HCT116 (cell line): ENCODE measurements at regions of chr5 and their contacts with region 1.

Region 1: DNA sequence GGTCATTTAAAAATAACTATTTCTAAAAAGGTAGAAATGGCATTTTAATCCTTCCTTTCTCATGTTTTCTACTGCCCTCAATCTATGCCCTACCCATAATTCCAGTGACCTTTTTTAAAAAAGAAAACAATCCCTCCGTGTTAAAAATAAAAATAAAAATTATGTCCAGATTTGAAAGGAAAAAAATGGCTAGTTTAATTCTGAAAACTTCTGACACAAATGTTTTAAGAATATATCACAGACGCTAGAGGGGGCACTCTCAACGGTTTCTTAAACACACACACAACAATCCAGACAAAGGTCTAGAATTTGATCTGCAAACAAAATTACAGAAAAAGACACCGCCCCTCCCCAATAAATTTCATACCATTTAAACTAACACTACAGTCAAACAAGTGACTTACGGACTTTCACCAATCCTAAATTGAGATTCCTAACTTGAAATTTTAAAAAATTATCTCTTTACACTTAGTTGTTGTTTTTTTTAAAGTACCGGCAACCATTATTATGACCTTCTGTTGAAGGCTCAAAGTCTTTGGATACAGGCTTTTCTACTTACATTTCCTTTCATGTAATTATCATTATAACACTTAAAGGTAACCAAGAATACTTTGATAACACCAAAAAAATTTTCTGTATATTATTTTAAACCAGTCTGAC is 38.2 kb downstream of the CLINT1 start:
- DNase-seq: peak; percentile 26
- ATAC-seq: 0 out of 2 replicates have a peak, but pooled peaks have one; percentile 44
- H3K4me3 ChIP-seq: no peak overlapping the region
- H3K27ac ChIP-seq: no peak overlapping the region
- H3K4me1 ChIP-seq: peaks cover 2 to 4% of the 10 kb centered on the region in 2 experiments; a peak in 1 of 4 replicates
- H3K27me3 ChIP-seq: no peaks in the 10 kb centered on the region
- CTCF ChIP-seq: peak; percentile 43 to 64 (median 48); a peak in 5 of 6 replicates
- POLR2A ChIP-seq: no peak
- RAD21 ChIP-seq: peak; percentile 45

Region 2: GRCh38 chr5:157917899-157918809 is 97.4 kb after region 1 on chr5:
- CTCF ChIA-PET with region 1: interaction called, 4 read pairs
- POLR2A ChIA-PET with region 1: no interaction called
- RAD21 ChIA-PET with region 1: no interaction called
- intact Hi-C with region 1: loop called (anchors 2 kb)
- DNase-seq: peak; percentile 66
- ATAC-seq: peak; percentile 100
- H3K4me3 ChIP-seq: no peak overlapping the region
- H3K27ac ChIP-seq: no peak overlapping the region
- H3K4me1 ChIP-seq: 0 out of 4 replicates have a peak, but pooled peaks cover 0 to 3% of the 10 kb centered on the region in 2 experiments
- H3K27me3 ChIP-seq: no peaks in the 10 kb centered on the region
- CTCF ChIP-seq: peak; percentile 70 to 81 (median 73)
- POLR2A ChIP-seq: no peak
- RAD21 ChIP-seq: peak; percentile 71

Region 3: GRCh38 chr5:157948738-157949410 is 128.2 kb after region 1 on chr5:
- CTCF ChIA-PET with region 1: interaction called, 15 read pairs
- POLR2A ChIA-PET with region 1: no interaction called
- RAD21 ChIA-PET with region 1: no interaction called
- intact Hi-C with region 1: loop called (anchors 5 kb)
- DNase-seq: peak; percentile 83
- ATAC-seq: peak; percentile 100
- H3K4me3 ChIP-seq: peak overlapping the region in 1 of 2 experiments; percentile 27; a peak in 1 of 4 replicates
- H3K27ac ChIP-seq: no peak overlapping the region
- H3K4me1 ChIP-seq: peaks cover 0 to 9% of the 10 kb centered on the region in 2 experiments; a peak in 1 of 4 replicates
- H3K27me3 ChIP-seq: no peaks in the 10 kb centered on the region
- CTCF ChIP-seq: peak; percentile 81 to 88 (median 88)
- POLR2A ChIP-seq: no peak
- RAD21 ChIP-seq: peak; percentile 67

Region 4: GRCh38 chr5:157994906-157995519 is 174.3 kb after region 1 on chr5:
- CTCF ChIA-PET with region 1: interaction called, 17 read pairs
- POLR2A ChIA-PET with region 1: no interaction called
- RAD21 ChIA-PET with region 1: no interaction called
- intact Hi-C with region 1: loop called (anchors 1 kb)
- DNase-seq: peak; percentile 46
- ATAC-seq: peak; percentile 99
- H3K4me3 ChIP-seq: no peak overlapping the region
- H3K27ac ChIP-seq: no peak overlapping the region
- H3K4me1 ChIP-seq: no peaks in the 10 kb centered on the region
- H3K27me3 ChIP-seq: no peaks in the 10 kb centered on the region
- CTCF ChIP-seq: peak; percentile 70 to 88 (median 73); a peak in 5 of 6 replicates
- POLR2A ChIP-seq: no peak
- RAD21 ChIP-seq: peak; percentile 79

Region 5: DNA sequence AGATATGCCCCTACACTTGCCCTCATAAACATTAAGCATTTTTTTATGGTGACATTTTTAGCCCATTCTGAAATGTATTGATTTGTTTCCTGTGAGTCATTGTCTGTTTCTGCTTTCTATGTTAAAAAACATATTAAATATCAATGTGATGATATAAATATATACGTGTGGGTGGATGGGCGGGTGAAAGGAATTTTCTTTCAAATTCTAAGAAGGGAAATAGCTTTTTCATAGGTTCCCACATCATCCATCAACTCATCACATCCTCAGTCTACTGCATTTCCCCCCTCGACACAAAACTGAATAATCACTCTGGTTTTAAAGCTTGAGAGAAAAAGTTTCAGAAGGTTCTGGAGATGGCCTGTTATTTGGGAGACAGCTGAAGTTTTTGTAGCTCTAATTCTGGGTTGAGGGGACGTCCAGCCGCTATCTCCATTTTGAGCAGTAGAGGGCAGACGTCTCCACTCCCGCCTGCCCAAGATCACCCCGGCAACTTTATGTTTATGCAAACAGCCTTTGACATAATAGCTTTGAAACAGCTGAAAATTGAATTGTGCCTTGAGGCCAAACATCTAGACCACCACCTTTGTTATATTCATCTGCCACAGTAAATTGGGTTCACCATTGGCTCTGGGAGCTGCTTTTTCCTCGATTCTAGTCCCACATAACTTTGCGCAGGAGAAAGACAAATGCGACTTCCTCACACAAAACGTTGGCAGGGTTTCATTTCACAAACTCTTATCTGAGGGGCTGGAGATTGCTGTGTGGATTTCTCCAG is 254.5 kb after region 1 on chr5:
- CTCF ChIA-PET with region 1: interaction called, 6 read pairs
- POLR2A ChIA-PET with region 1: no interaction called
- RAD21 ChIA-PET with region 1: no interaction called
- intact Hi-C with region 1: loop called (anchors 10 kb)
- DNase-seq: peak; percentile 42
- ATAC-seq: peak; percentile 93
- H3K4me3 ChIP-seq: no peak overlapping the region
- H3K27ac ChIP-seq: no peak overlapping the region
- H3K4me1 ChIP-seq: no peaks in the 10 kb centered on the region
- H3K27me3 ChIP-seq: peaks cover 15% of the 10 kb centered on the region
- CTCF ChIP-seq: peak; percentile 37 to 80 (median 78); a peak in 5 of 6 replicates
- POLR2A ChIP-seq: no peak
- RAD21 ChIP-seq: peak; percentile 65